Esophagus squamous epithelium (tissue), 5 donors: ENCODE measurements at regions of chr6 and their contacts with region 1.

Region 1: GRCh38 chr6:132798869-132799538 is 567 bp upstream of the SLC18B1 start:
- DNase-seq: no peak
- H3K4me3 ChIP-seq: peak overlapping the region in 3 of 4 donors; percentile 75 to 86 (median 80)
- H3K27ac ChIP-seq: no peak overlapping the region
- H3K4me1 ChIP-seq: peaks cover 0 to 13% (median 0%) of the 10 kb centered on the region in 3 donors
- H3K27me3 ChIP-seq: no peaks in the 10 kb centered on the region
- CTCF ChIP-seq: peak; percentile 36 to 79 (median 62)
- POLR2A ChIP-seq: no peak

Region 2: DNA sequence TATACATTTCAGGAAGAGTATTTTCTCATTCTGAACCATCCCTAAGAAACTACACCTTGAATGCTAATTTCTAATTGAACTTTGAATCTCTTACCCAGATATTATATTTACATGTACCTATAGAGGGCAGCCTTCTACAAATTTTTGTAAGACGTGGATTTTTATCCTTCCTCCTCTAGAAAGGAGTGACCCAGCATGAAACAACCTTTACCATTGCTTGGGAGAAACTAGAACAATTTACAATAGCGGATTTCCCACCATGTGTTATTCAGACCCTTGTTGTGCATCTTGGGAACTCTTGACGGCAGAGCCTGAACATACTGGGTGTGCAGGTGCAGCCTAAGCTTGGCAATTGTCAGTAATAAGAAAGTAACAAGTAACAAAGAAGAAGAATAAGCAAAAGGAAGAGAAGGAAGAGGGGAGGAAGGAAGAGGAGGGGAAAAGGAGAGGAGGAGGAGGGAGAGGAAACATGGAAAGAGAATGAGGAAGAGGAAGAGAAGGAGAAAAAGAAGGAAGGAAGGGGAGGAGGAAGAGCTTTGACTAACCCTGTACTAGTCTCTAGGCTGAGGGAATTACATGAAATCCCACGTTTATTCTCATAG is 129.2 kb before region 1 on chr6:
- intact Hi-C with region 1: loop called (anchors 10 kb)
- DNase-seq: no peak
- H3K4me3 ChIP-seq: no peak overlapping the region
- H3K27ac ChIP-seq: no peak overlapping the region
- H3K4me1 ChIP-seq: peaks cover 0 to 5% (median 0%) of the 10 kb centered on the region in 3 donors
- H3K27me3 ChIP-seq: no peaks in the 10 kb centered on the region
- CTCF ChIP-seq: peak in 5 of 6 experiments; percentile 41 to 70 (median 47)
- POLR2A ChIP-seq: no peak